Activated CD4-positive, alpha-beta memory T cell treated with anti-CD3 and anti-CD28 coated beads for 36 hours (primary cell): ENCODE measurements at regions of chr6 and their contacts with region 1.

Region 1: DNA sequence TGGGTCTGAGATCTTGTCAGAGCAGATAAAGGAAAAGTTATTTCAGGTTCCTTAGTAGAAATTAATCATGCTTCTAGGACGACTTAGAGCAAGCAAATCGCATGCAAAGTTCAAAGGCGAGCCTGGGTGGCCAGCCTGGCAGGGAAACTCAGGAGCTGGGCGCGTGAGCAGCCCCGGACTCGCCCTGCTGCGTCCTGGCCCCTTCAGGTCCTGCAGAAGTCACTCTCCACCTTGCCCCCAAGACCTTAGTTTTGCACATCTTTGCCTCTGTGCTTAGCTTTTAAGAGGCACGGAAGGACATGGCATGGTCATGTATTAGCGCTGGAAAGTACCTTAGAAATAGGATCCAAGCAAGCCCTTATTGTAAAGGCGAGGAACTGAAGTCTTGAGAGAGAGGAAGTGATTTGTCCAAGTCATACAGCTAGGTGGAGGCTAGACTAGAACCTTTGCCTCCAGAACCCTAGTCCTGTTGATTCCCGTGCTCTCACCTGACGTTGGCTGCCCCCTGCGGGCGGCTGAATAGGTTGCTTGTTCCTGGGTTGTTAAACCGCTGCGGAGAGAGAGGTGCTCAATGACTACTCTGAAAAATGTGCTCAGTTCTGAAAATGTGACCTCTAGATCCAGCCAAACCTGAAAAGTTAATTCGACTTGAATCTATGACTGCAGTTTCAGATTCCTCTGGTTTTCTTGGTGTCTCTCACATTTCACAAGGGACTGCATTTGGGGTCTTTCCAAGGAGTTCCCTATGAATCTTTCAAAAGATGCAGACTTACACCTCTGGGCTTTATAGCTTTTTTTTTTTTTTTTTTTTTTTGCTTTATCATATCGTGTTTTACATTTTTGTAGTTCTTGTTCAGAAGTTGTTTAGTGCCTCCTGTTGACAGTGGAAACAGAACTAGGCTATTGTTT is 2.7 kb downstream of the MYB start:
- DNase-seq: peak; percentile 91
- H3K4me3 Mint-ChIP-seq: peak overlapping the region; percentile 88
- H3K27ac Mint-ChIP-seq: peak overlapping the region; percentile 92
- H3K4me1 Mint-ChIP-seq: peaks cover 17% of the 10 kb centered on the region
- H3K27me3 Mint-ChIP-seq: no peaks in the 10 kb centered on the region

Region 2: DNA sequence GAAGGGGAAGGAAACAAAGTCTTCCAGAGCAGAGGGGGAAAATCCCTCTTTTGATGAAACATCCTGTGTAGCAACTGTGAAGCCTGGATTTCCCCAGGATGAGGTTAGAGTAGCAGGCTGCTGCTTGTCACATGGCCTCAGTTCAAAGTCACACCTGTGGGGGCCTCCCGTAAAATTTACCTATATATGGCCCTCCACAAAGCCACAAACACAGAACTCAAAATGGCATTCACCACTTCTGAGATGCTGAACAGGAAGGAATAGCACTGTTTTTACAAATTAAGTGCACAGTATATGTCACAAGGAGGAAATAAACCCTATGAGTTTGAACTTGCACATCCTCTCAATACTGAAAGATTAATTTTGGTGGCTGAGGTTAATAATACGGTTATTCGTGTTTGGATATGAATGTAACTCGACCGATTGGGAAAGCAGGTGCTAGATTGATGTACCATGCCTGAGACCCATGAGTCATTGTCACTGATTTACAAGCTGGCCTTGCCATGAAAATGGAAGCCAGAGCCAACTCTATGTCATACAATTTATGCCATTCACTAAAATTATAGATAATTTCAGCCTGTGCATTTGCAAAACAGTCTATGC is 936.5 kb before region 1 on chr6:
- CTCF ChIA-PET with region 1: no interaction called
- POLR2A ChIA-PET with region 1: no interaction called
- intact Hi-C with region 1: loop called (anchors 5 kb)
- DNase-seq: peak; percentile 86
- H3K4me3 Mint-ChIP-seq: peak overlapping the region; percentile 20
- H3K27ac Mint-ChIP-seq: peak overlapping the region; percentile 86
- H3K4me1 Mint-ChIP-seq: peaks cover 51% of the 10 kb centered on the region
- H3K27me3 Mint-ChIP-seq: no peaks in the 10 kb centered on the region

Region 3: GRCh38 chr6:134317471-134318131 is 866.2 kb before region 1 on chr6 and contains the start of gene SGK1:
- CTCF ChIA-PET with region 1: no interaction called
- POLR2A ChIA-PET with region 1: no interaction called
- intact Hi-C with region 1: no loop called
- DNase-seq: peak; percentile 32
- H3K4me3 Mint-ChIP-seq: peak within 1 kb of the TSS; percentile 73
- H3K27ac Mint-ChIP-seq: no peak within 1 kb of the TSS
- H3K4me1 Mint-ChIP-seq: peaks cover 15% of the 10 kb centered on the region
- H3K27me3 Mint-ChIP-seq: peaks cover 13% of the 10 kb centered on the region
- total RNA-seq, gene SGK1: 39.7 to 41.0 TPM

Region 4: DNA sequence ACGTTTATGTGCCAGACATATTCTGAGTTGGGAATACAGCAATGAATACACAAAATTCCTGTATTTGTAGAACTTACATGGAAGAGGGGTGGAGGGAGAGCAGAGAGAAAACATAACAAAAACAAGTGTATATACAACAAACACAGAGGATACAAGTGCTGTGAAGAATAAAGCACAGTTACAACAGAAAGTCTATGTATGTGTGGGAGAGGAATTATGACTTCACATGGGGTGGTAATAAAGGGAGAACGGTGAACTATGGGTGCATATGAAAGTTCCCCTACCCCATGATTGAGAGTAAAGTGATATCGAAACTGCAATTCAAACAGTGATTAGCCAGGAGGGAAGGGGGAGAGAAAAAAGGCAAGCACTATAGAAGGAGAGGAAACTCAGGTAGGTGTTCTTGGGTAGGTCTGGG is 153.7 kb before region 1 on chr6:
- CTCF ChIA-PET with region 1: no interaction called
- POLR2A ChIA-PET with region 1: no interaction called
- intact Hi-C with region 1: loop called (anchors 1 kb)
- DNase-seq: no peak
- H3K4me3 Mint-ChIP-seq: peak overlapping the region; percentile 0
- H3K27ac Mint-ChIP-seq: peak overlapping the region; percentile 52
- H3K4me1 Mint-ChIP-seq: peaks cover 58% of the 10 kb centered on the region
- H3K27me3 Mint-ChIP-seq: no peaks in the 10 kb centered on the region

Region 5: GRCh38 chr6:135094403-135094848 is 89.4 kb before region 1 on chr6:
- CTCF ChIA-PET with region 1: interaction called, 3 read pairs
- POLR2A ChIA-PET with region 1: interaction called, 4 read pairs
- intact Hi-C with region 1: loop called (anchors 1 kb)
- DNase-seq: peak; percentile 50
- H3K4me3 Mint-ChIP-seq: no peak overlapping the region
- H3K27ac Mint-ChIP-seq: peak overlapping the region; percentile 76
- H3K4me1 Mint-ChIP-seq: peaks cover 49% of the 10 kb centered on the region
- H3K27me3 Mint-ChIP-seq: no peaks in the 10 kb centered on the region

Region 6: GRCh38 chr6:135145063-135145800 is 38.6 kb before region 1 on chr6:
- CTCF ChIA-PET with region 1: interaction called, 27 read pairs
- POLR2A ChIA-PET with region 1: interaction called, 8 read pairs
- intact Hi-C with region 1: loop called (anchors 1 kb)
- DNase-seq: no peak
- H3K4me3 Mint-ChIP-seq: no peak overlapping the region
- H3K27ac Mint-ChIP-seq: peak overlapping the region; percentile 39
- H3K4me1 Mint-ChIP-seq: peaks cover 53% of the 10 kb centered on the region
- H3K27me3 Mint-ChIP-seq: peaks cover 2% of the 10 kb centered on the region

Region 7: DNA sequence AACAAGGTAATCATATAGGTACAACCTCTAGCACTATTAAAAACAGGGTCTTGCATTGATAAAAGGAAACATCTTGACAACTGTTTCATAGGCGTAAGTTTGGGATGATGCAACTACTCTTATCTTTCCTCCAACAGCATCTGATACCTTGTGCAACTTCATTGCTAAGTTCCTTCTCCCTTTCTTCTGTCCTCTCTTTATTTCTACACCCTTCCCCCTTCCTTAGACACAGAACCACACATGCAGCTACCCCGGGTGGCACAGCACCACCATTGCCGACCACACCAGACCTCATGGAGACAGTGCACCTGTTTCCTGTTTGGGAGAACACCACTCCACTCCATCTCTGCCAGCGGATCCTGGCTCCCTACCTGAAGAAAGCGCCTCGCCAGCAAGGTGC is 11.7 kb after region 1 on chr6:
- CTCF ChIA-PET with region 1: interaction called, 6 read pairs
- POLR2A ChIA-PET with region 1: interaction called, 4 read pairs
- intact Hi-C with region 1: loop called (anchors 1 kb)
- DNase-seq: no peak
- H3K4me3 Mint-ChIP-seq: no peak overlapping the region
- H3K27ac Mint-ChIP-seq: no peak overlapping the region
- H3K4me1 Mint-ChIP-seq: peaks cover 24% of the 10 kb centered on the region
- H3K27me3 Mint-ChIP-seq: no peaks in the 10 kb centered on the region

Region 8: GRCh38 chr6:135251964-135252429 is 68.2 kb after region 1 on chr6:
- CTCF ChIA-PET with region 1: no interaction called
- POLR2A ChIA-PET with region 1: no interaction called
- intact Hi-C with region 1: no loop called
- DNase-seq: peak; percentile 29
- H3K4me3 Mint-ChIP-seq: no peak overlapping the region
- H3K27ac Mint-ChIP-seq: no peak overlapping the region
- H3K4me1 Mint-ChIP-seq: no peaks in the 10 kb centered on the region
- H3K27me3 Mint-ChIP-seq: no peaks in the 10 kb centered on the region